ENCODE measurements at regions of chr12 and their contacts with region 1.

Region 1: DNA sequence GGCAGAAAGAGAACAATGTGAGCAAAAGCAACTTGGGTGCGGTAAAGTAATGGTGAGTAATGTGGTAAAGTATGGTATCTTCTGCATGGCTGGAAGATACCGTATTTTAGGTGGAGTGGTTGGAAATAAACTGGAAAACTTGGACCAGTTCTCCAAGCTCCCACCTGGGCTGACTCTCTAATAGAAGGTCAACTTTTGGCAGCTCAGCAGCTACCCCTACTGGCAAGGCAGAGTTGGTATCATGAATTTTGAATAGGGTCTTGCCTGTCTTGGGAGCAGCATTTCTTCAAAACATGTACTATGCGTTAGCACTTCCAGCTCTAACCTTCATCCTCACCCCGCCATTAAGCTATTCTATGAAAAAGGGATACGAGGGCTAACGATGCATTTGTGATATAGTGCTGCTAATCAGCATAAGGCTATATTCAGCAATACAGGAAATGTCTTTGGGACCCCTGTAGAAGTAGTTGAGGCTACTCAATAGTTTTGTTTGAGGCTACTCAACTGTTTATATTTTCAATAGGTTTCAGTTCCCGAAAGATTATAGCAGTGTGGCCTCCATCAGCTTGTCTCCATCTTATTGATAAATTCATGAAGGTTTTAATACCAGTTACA is 276.3 kb upstream of the FAR2 start:
- DNase-seq: peak; percentile 56 to 62
- H3K4me3 ChIP-seq: no peak overlapping the region
- H3K27ac ChIP-seq: no peak overlapping the region
- H3K4me1 ChIP-seq: 0 out of 2 replicates have a peak, but pooled peaks cover 11% of the 10 kb centered on the region
- H3K27me3 ChIP-seq: no peaks in the 10 kb centered on the region
- CTCF ChIP-seq: peak; percentile 87

Region 2: GRCh38 chr12:28172434-28173030 is 700.2 kb before region 1 on chr12:
- CTCF ChIA-PET with region 1: no interaction called
- POLR2A ChIA-PET with region 1: no interaction called
- intact Hi-C with region 1: loop called (anchors 1 kb)
- DNase-seq: peak in 1 of 2 experiments; percentile 31
- H3K4me3 ChIP-seq: no peak overlapping the region
- H3K27ac ChIP-seq: no peak overlapping the region
- H3K4me1 ChIP-seq: no peaks in the 10 kb centered on the region
- H3K27me3 ChIP-seq: no peaks in the 10 kb centered on the region
- CTCF ChIP-seq: peak; percentile 72

Measured in PC-9 (cell line).